Sciatic nerve (tissue), 2 donors: ENCODE measurements at regions of chr17 and their contacts with region 1.

Region 1: DNA sequence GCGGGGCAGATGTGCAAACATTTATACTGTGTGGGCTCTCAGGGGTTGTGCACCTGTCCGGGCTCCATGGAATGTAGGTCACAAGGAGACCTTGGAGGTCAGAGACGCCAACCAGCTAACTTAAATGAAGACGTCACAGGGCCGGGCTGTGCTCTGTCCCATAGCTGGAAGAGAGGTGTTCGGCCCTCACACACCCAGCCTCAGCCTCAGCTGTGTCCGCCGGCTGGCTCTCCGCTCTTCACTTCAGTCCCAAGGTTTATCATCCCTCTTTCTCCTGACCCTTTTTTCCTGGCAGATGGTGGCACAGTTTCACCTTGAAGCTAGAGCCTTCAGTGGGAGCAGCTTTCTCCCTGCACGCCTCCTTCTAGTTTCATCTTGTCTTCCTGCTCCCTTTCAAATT is 6.0 kb upstream of the RBFOX3 start:
- DNase-seq: no peak
- ATAC-seq: no peak

Region 2: GRCh38 chr17:79633993-79634813 is 17.4 kb after region 1 on chr17:
- intact Hi-C with region 1: loop called (anchors 1 kb)
- DNase-seq: peak; percentile 44
- ATAC-seq: no peak

Region 3: GRCh38 chr17:80101011-80101945 is 484.5 kb after region 1 on chr17 and contains the start of gene GAA:
- intact Hi-C with region 1: no loop called
- DNase-seq: peak; percentile 92
- ATAC-seq: peak; percentile 85
- total RNA-seq, gene GAA: 60.7 TPM